ENCODE measurements at regions of chr12 and their contacts with region 1.

Region 1: GRCh38 chr12:47377414-47378221 is 297.9 kb upstream of the AMIGO2 start:
- DNase-seq: peak; percentile 86
- H3K4me3 ChIP-seq: no peak overlapping the region
- H3K27ac ChIP-seq: peak overlapping the region; percentile 37 to 81 (median 76)
- H3K4me1 ChIP-seq: peaks cover 3 to 8% (median 6%) of the 10 kb centered on the region in 4 donors
- H3K27me3 ChIP-seq: no peaks in the 10 kb centered on the region
- CTCF ChIP-seq: no peak
- EP300 ChIP-seq: peak; percentile 91
- POLR2A ChIP-seq: no peak

Region 2: DNA sequence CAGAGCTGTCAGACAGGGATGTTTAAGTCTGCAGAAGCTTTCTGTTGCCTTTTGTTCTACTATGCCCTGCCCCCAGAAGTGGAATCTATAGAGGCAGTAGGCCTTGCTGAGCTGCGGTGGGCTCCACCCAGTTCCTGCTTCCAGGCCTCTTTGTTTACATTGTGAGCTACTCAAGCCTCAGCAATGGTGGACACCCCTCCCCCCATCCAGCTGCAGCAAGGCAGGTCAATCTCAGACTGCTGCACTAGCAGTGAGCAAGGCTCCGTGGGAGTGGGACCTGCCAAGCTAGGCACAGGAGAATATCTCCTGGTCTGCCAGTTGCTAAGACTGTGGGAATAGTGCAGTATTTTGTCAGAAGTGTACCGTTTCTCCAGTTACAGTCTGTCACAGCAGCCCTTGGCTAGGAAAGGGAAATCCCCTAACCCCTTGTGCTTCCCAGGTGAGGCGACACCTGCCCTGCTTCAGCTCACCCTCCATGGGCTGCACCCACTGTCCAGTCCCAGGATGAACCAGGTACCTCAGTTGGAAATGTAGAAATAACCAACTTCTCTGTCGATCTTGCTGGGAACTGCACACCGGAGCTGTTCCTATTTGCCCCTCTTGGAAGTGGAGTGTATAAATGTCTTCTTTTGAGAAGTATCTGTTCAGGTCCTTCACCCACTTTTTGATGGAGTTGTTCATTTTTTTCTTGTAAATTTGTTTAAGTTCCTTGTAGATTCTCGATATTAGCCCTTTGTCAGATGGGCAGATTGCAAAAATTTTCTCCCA is 791.6 kb before region 1 on chr12:
- in situ Hi-C with region 1: no loop called
- intact Hi-C with region 1: no loop called
- DNase-seq: peak; percentile 62
- H3K4me3 ChIP-seq: no peak overlapping the region
- H3K27ac ChIP-seq: no peak overlapping the region
- H3K4me1 ChIP-seq: peaks cover 4 to 9% (median 7%) of the 10 kb centered on the region in 4 donors
- H3K27me3 ChIP-seq: no peaks in the 10 kb centered on the region
- CTCF ChIP-seq: no peak
- EP300 ChIP-seq: no peak
- POLR2A ChIP-seq: no peak

Region 3: DNA sequence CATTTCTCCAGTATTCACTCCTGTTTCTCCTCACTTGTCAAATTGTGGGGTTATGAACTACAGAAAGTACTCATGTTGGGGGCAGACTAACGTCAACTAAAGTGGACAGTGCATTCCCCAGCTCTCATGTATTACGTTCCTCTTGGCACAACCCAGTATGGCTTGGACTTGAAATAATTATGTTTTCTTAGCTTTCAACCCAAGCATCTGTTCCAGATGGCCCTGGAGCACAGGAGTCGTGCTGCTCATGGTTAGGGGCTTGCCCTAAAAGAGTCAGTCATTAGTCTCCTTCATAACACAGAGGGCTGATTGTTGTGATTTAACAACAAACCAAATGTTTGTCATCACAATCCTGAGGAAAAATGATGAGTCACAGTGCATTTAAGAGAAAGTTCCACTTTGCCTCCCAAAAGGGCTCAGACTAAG is 173.8 kb after region 1 on chr12:
- in situ Hi-C with region 1: no loop called
- intact Hi-C with region 1: loop called (anchors 10 kb)
- DNase-seq: no peak
- H3K4me3 ChIP-seq: no peak overlapping the region
- H3K27ac ChIP-seq: peak overlapping the region; percentile 27 to 70 (median 62)
- H3K4me1 ChIP-seq: peaks cover 0 to 4% (median 2%) of the 10 kb centered on the region in 4 donors
- H3K27me3 ChIP-seq: no peaks in the 10 kb centered on the region
- CTCF ChIP-seq: no peak
- EP300 ChIP-seq: peak; percentile 58
- POLR2A ChIP-seq: no peak

Region 4: GRCh38 chr12:47858511-47859266 is 481.1 kb after region 1 on chr12:
- in situ Hi-C with region 1: no loop called
- intact Hi-C with region 1: no loop called
- DNase-seq: no peak
- H3K4me3 ChIP-seq: no peak overlapping the region
- H3K27ac ChIP-seq: no peak overlapping the region
- H3K4me1 ChIP-seq: no peaks in the 10 kb centered on the region
- H3K27me3 ChIP-seq: no peaks in the 10 kb centered on the region
- CTCF ChIP-seq: no peak
- EP300 ChIP-seq: no peak
- POLR2A ChIP-seq: no peak